Common myeloid progenitor, CD34-positive (primary cell): ENCODE measurements at regions of chr12 and their contacts with region 1.

Region 1: DNA sequence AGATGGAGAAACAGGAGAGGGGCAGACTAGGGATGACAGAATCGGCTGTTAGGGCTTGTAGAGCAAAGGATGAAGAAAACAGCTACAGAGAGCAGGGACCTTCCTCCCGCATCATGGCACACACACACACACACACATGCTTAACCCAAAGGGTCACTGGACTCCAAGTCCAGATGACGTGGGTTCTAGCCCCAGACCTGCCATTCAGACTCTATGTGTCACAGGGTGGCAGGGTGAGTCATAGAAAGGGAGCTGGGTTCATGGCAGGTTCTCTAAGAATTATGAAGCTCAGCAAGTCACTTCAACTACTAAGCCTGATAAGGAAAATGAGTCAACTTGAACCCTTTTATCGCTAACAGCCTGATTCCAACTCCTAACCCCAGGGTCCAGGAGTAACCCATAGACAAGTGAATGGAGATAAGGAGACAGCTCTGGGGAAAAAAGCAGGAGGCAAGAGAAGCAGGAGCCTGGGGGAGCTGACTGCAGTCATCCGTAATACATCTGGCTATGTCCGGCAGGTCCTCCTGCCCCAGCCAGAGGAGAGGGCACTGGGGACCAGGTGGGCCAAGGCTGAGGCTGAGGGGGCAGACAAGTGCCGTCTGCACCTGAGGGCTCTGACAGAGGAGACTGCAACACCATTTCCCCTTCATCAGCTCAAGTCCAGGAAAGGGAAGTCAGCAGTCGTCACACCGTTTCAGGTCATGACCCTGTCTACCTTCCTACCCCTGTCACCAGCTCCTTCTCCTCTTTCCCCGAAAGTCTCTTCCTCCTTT is 3.6 kb upstream of the TNFRSF1A start:
- DNase-seq: peak; percentile 52 to 86 (median 77)
- H3K4me3 ChIP-seq: peak overlapping the region in 1 of 7 experiments; percentile 33
- H3K27ac ChIP-seq: no peak overlapping the region
- H3K4me1 ChIP-seq: peaks cover 14 to 65% (median 58%) of the 10 kb centered on the region in 4 experiments
- H3K27me3 ChIP-seq: no peaks in the 10 kb centered on the region

Region 2: DNA sequence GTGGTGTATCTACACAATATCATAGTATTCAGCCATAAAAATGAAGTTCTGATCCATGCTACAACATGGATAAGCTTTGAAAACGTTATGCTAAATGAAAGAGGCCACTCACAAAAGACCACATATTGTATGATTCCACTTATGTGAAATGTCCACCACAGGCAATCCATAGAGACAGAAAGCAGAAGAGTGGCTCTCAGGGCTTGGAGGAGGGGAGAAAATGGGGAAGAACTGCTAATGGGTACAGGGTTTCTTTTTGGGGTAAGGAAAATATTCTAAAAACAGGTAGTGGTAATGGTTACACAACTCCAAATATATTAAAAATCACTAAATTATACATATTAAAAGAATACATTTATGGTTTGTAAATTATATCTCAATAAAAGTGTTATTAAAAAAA is 13.4 kb after region 1 on chr12:
- CTCF ChIA-PET with region 1: interaction called, 14 read pairs
- POLR2A ChIA-PET with region 1: interaction called, 5 read pairs
- DNase-seq: peak in 2 of 3 donors; percentile 48 to 53
- H3K4me3 ChIP-seq: no peak overlapping the region
- H3K27ac ChIP-seq: no peak overlapping the region
- H3K4me1 ChIP-seq: peaks cover 0 to 29% (median 9%) of the 10 kb centered on the region in 4 experiments
- H3K27me3 ChIP-seq: no peaks in the 10 kb centered on the region

Region 3: DNA sequence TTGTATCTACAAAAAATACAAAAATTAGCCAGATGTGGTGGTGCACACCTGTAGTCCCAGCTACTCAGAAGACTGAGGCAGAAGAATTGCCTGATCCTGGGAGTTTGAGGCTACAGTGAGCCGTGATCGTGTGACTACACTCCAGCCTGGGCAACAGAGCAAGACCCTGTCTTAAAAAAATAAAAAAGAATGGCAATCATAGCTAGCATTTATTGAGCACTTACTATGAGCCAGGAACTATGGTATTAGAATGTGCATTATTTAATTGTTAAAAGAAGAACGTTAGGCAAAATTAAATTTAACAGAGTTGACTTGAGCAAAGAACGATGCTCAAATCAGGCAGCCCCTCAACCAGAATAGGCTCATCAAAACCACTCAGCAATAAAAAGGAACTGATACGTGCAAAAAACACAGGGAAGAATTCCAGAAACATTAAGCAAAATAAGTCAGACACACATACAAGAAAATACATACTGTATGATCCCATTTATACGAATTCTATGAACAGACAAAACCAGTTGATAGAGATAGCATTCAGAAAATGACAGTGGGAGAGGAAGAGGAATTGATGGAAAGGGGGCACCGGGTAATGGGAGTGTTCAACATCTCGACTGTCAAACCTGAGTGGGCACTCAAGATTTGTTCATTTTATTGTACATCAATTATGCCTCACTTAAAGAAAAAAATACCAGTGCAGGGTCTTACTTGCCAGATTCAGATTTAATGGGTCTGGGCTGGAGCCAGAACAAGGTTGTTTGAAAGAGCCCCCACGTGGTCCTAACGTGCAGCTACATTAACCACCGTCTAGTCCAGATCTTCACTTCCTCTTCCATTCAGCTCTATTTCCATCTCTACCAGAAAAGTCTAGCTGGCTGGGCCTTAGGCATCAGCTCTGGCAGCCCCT is 21.8 kb after region 1 on chr12:
- CTCF ChIA-PET with region 1: interaction called, 73 read pairs
- POLR2A ChIA-PET with region 1: interaction called, 5 read pairs
- DNase-seq: peak; percentile 84 to 93 (median 92)
- H3K4me3 ChIP-seq: no peak overlapping the region
- H3K27ac ChIP-seq: no peak overlapping the region
- H3K4me1 ChIP-seq: peaks cover 8 to 61% (median 40%) of the 10 kb centered on the region in 4 experiments
- H3K27me3 ChIP-seq: no peaks in the 10 kb centered on the region

Region 4: DNA sequence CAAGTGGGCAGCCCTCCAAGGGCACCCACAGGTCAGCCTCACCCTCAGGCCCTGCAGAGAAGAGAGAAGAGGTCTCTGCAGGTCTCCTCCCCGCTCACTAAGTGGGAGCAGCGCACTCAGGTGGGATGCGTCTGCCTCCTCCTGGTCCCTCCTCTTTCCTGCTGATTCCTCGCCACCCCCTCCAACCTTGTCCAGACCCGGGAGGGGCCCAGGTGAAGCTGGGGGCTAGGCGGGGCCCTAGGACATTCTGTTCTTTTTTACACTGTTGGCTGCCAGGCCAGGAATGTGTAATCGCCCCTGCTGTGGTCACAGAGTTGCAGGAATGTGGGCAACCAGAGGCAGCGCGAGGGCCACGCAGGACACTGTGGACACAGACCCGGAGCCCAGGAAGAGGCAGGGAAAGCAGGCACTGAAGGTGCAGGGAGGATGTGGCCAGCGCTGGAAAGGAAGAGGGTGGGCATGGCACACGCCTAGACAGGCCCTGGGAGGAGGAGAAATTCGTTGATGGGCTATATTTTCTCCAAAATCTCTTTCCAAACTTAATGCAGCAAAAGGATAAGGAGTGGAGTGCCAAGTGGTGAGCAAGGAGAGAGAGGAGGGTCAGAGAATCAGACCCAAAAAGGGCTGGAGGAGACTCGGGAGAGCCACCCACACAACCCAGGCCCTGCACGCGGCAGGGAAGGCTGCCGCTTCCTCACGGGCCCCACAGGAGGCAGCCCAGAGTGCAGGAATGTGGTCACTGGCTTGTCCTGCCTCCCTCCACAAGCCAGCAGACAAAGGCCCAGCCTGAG is 30.8 kb after region 1 on chr12:
- CTCF ChIA-PET with region 1: interaction called, 73 read pairs
- POLR2A ChIA-PET with region 1: no interaction called
- DNase-seq: peak in 1 of 3 donors; percentile 37
- H3K4me3 ChIP-seq: peak overlapping the region in 2 of 7 experiments; percentile 12 to 46
- H3K27ac ChIP-seq: no peak overlapping the region
- H3K4me1 ChIP-seq: peaks cover 4 to 77% (median 51%) of the 10 kb centered on the region in 4 experiments
- H3K27me3 ChIP-seq: no peaks in the 10 kb centered on the region

Region 5: GRCh38 chr12:6493497-6494257 is 148.2 kb after region 1 on chr12 and contains the start of gene NCAPD2:
- CTCF ChIA-PET with region 1: no interaction called
- POLR2A ChIA-PET with region 1: no interaction called
- DNase-seq: peak; percentile 93 to 98 (median 97)
- H3K4me3 ChIP-seq: peak within 1 kb of the TSS; percentile 90 to 98 (median 95)
- H3K27ac ChIP-seq: peak within 1 kb of the TSS; percentile 93 to 94
- H3K4me1 ChIP-seq: peaks cover 21 to 30% (median 26%) of the 10 kb centered on the region in 4 experiments
- H3K27me3 ChIP-seq: no peaks in the 10 kb centered on the region